A673 (cell line): ENCODE measurements at regions of chr6 and their contacts with region 1.

Region 1: GRCh38 chr6:28895134-28895812 is 28.5 kb downstream of the TRIM27 start:
- DNase-seq: peak; percentile 97
- H3K4me3 ChIP-seq: peak overlapping the region; percentile 68
- H3K27ac ChIP-seq: peak overlapping the region; percentile 97
- H3K4me1 ChIP-seq: peaks cover 5% of the 10 kb centered on the region
- H3K27me3 ChIP-seq: no peaks in the 10 kb centered on the region
- CTCF ChIP-seq: no peak

Region 2: DNA sequence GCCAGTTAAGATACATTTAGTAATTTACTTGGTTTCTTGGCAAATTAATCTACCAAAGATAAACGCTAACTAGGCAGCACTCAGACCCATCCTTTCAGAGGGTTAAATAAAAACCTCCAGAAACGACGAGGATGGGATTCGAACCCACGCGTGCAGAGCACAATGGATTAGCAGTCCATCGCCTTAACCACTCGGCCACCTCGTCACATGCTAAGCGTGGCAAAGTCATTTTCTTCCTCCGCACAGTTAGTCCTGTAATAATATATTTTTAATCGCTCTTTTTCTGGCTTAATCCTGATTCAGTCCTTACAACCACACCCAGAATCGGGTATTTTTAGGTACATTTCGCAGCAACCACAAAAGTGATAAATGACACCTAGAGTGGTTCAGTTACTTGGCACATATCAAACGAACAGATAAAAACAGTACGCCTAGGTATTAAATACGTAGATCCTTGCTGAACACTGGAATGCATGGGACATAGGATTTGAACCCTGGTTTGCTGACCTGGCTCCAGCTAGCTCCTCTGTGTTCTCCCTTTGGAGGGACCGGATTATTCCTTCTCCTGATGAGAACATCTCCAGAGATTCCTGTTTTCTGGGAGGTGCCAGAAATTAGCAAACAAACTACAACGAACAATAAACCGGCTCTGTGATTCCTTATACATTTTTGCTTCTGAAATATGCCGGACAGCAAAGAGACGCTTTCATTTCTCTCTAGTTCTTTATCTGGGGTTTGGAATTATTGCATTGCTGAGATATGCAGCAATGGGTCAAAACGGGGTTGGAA is 297.9 kb before region 1 on chr6:
- CTCF ChIA-PET with region 1: no interaction called
- POLR2A ChIA-PET with region 1: no interaction called
- intact Hi-C with region 1: no loop called
- DNase-seq: peak; percentile 82
- H3K4me3 ChIP-seq: peak overlapping the region; percentile 49
- H3K27ac ChIP-seq: no peak overlapping the region
- H3K4me1 ChIP-seq: peaks cover 3% of the 10 kb centered on the region
- H3K27me3 ChIP-seq: no peaks in the 10 kb centered on the region
- CTCF ChIP-seq: no peak

Region 3: DNA sequence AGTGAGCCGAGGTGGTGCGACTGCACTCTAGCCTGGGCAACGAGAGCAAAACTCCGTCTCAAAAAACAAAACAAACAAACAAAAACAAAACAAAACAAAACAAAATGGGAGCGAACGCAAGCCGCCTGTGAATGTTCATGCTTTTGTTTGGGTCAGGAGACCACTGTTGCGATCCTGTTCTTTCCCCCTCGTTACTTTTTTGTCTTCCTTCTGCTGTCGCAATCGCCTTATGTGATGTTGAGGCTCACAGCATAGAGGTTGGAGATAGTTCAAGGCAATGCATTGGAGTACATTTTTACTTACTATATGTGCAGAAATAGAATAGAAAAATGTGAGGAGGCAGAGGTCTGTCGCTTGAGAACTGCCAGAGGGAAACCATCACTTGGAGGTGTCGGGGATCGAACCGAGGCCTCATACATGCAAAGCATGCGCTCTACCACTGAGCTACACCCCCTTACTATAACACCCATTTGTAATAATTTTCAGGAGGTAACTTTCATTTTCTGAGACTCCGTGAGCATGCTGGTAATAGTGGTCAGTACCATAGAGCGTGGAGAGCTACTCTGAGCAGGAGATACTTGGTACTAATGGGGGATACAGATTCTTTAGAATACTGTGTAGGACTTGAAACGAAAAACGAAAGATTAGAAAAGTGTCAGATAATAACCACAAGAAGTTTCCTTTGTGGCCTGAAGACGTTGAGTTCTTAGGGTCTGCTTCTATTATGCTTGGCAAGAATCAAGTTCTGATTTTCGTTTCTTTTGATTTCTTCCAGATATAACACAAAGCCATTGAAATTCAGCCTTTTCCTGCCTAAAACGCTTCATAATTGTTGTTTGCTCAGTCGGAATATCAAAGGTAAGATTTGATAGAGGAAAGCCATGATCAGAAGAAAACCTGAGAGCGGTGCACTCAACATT is 92.6 kb before region 1 on chr6:
- CTCF ChIA-PET with region 1: no interaction called
- POLR2A ChIA-PET with region 1: no interaction called
- intact Hi-C with region 1: loop called (anchors 5 kb)
- DNase-seq: peak; percentile 92
- H3K4me3 ChIP-seq: peak overlapping the region; percentile 55
- H3K27ac ChIP-seq: peak overlapping the region; percentile 73
- H3K4me1 ChIP-seq: peaks cover 4% of the 10 kb centered on the region
- H3K27me3 ChIP-seq: no peaks in the 10 kb centered on the region
- CTCF ChIP-seq: no peak

Region 4: GRCh38 chr6:28880894-28881780 is 14.1 kb before region 1 on chr6:
- CTCF ChIA-PET with region 1: interaction called, 6 read pairs
- POLR2A ChIA-PET with region 1: no interaction called
- intact Hi-C with region 1: loop called (anchors 2 kb)
- DNase-seq: peak; percentile 88
- H3K4me3 ChIP-seq: peak overlapping the region; percentile 66
- H3K27ac ChIP-seq: peak overlapping the region; percentile 70
- H3K4me1 ChIP-seq: no peaks in the 10 kb centered on the region
- H3K27me3 ChIP-seq: no peaks in the 10 kb centered on the region
- CTCF ChIP-seq: no peak

Region 5: DNA sequence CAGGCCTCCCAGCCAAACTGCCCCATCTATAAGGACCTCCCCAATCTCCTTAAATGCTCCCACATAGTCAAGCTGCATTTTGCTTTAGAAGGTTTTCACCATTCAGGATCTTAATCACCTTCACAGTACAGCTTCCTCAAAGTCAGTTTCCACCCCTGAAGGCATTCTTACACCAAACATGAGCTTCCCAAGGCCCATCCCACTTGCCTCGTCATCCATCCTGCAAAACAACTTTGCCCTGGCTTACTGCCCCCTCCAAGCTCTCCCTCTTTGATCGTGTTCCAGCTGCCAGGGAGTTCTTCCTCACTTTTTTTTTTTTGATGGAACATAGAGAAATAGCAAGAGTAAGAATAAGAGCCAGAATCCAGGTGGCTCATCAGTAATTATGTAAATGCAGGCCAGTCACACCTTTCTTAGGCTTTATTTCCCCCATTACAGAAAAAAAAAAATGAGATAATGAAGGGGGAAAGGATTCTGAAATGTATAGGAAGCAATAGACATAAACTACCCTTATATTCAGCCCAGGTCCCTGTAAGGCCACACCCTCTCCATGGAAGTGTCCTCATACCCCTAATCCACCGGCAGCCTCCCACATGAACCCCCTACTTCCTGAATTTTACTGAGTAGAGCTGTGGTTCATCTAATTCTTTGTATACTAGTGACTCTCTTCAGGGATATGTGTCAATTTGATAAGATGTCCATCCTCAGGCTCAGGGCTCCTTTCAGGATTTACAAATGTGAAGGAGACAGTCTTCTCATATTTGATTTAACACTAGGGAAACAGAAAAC is 15.8 kb after region 1 on chr6:
- CTCF ChIA-PET with region 1: no interaction called
- POLR2A ChIA-PET with region 1: no interaction called
- intact Hi-C with region 1: no loop called
- DNase-seq: no peak
- H3K4me3 ChIP-seq: no peak overlapping the region
- H3K27ac ChIP-seq: no peak overlapping the region
- H3K4me1 ChIP-seq: no peaks in the 10 kb centered on the region
- H3K27me3 ChIP-seq: no peaks in the 10 kb centered on the region
- CTCF ChIP-seq: no peak

Region 6: DNA sequence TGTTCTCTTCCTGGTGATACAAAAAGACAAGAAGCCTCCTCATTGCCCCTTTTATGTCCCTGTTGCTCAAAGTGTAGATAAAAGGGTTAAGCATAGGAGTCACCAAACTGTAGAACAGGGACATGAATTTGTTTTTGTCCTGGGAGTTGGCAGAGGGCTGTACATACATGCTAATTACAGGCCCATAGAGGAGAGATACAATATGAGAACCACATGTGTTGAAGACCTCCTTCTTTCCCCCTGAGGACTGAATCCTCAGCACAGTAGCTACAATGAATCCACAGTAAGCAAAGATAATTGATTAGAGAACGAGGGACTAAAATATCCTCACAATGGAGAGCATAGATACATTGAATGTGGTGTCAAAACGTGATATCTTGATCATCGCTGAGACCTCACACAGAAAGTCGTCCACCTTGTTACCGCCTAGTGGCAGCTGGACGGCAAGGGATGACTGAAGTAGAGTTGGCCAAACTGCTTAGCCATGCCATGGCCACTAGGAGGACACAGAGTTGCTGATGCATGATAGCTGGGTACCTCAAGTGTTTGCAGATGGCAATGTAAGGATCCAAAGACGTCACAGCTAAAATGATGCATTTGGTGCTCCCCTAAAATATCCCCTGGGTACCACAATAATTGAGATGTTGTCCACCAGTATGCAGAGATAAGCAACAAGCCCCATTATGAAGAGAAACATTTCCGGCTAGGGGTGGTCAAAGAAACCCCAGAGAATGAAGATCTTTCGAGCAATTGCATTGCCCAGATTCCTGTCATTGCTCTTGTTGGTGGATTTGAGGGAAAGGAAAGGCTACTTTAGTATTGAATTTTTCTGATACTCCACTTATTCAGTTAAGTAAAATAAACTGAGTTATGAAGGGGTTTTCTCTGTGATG is 176.8 kb after region 1 on chr6:
- CTCF ChIA-PET with region 1: no interaction called
- POLR2A ChIA-PET with region 1: no interaction called
- intact Hi-C with region 1: no loop called
- DNase-seq: peak; percentile 45
- H3K4me3 ChIP-seq: no peak overlapping the region
- H3K27ac ChIP-seq: no peak overlapping the region
- H3K4me1 ChIP-seq: no peaks in the 10 kb centered on the region
- H3K27me3 ChIP-seq: peaks cover 34% of the 10 kb centered on the region
- CTCF ChIP-seq: peak; percentile 62

Region 7: GRCh38 chr6:29092957-29093356 is 197.7 kb after region 1 on chr6:
- CTCF ChIA-PET with region 1: no interaction called
- POLR2A ChIA-PET with region 1: no interaction called
- intact Hi-C with region 1: no loop called
- DNase-seq: no peak
- H3K4me3 ChIP-seq: no peak overlapping the region
- H3K27ac ChIP-seq: no peak overlapping the region
- H3K4me1 ChIP-seq: no peaks in the 10 kb centered on the region
- H3K27me3 ChIP-seq: peaks cover 15% of the 10 kb centered on the region
- CTCF ChIP-seq: no peak